ENCODE measurements at regions of chr12 and their contacts with region 1.

Region 1: DNA sequence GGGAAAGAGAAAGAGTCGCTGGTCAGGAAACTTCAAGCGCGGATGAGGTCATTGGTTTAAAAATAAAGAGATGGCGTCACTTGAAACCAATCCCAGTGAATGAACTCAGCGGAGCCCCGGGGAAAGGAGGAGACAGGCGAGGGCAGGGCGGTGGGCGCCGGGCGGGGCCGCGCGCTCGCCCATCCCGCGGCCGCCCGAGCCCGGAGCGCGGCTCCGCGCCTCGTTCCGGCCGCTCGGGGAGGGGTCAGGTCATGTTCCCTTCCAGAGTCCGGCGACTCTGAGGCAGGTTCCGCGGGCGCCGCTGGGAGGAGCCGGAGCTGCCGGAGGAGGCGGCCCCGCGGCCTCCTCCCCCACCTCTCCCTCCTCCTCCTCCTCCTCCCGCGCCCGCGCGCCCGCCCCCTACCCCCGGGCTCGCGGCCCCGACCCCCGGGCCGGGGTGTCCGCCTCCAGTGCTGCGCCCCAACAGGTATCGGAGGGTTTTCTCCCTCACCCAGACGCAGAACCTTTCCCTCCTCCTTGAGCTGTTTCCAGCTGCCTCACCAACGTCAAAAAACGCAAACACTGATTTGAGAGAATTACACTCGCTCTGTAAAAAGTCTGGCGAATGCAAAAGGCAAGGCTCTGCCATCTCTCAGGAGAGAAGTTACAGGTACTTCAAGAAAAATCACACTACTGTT is at the start of gene DUSP16:
- DNase-seq: peak; percentile 82
- ATAC-seq: peak; percentile 76
- H3K4me3 Mint-ChIP-seq: peak within 1 kb of the TSS; percentile 84
- H3K27ac Mint-ChIP-seq: peak within 1 kb of the TSS; percentile 88
- H3K4me1 Mint-ChIP-seq: peaks cover 37% of the 10 kb centered on the region
- H3K27me3 Mint-ChIP-seq: no peaks in the 10 kb centered on the region
- total RNA-seq, gene DUSP16: 39.3 to 40.4 TPM

Region 2: DNA sequence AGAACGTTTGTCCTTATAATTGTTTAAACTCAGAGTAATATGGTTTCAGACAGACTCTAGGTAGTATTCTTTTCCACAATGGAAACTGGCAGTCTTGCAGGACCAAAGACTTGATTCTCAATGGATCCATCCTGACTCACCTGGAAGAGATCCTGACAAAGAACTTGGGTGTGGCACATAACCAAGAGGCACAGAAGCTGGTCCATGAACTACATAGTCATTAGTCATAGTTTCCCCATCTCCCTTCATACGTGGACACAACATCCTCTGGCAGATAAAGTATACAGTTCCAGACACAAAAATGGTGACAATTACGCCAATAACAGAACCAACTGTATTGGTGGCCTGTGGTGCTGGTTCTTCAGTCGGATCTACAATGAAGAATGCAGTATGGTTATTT is 436.2 kb before region 1 on chr12:
- CTCF ChIA-PET with region 1: no interaction called
- POLR2A ChIA-PET with region 1: no interaction called
- intact Hi-C with region 1: no loop called
- DNase-seq: no peak
- ATAC-seq: no peak
- H3K4me3 Mint-ChIP-seq: no peak overlapping the region
- H3K27ac Mint-ChIP-seq: no peak overlapping the region
- H3K4me1 Mint-ChIP-seq: no peaks in the 10 kb centered on the region
- H3K27me3 Mint-ChIP-seq: no peaks in the 10 kb centered on the region

Region 3: GRCh38 chr12:12376646-12377448 is 185.9 kb before region 1 on chr12:
- CTCF ChIA-PET with region 1: interaction called, 26 read pairs
- POLR2A ChIA-PET with region 1: no interaction called
- intact Hi-C with region 1: loop called (anchors 1 kb)
- DNase-seq: peak; percentile 27
- ATAC-seq: peak; percentile 75
- H3K4me3 Mint-ChIP-seq: no peak overlapping the region
- H3K27ac Mint-ChIP-seq: peak overlapping the region; percentile 45
- H3K4me1 Mint-ChIP-seq: peaks cover 37% of the 10 kb centered on the region
- H3K27me3 Mint-ChIP-seq: no peaks in the 10 kb centered on the region

Region 4: GRCh38 chr12:12456637-12457036 is 106.1 kb before region 1 on chr12:
- CTCF ChIA-PET with region 1: interaction called, 10 read pairs
- POLR2A ChIA-PET with region 1: no interaction called
- intact Hi-C with region 1: loop called in 1 of 2 experiments (anchors 5 kb)
- DNase-seq: no peak
- ATAC-seq: peak; percentile 57
- H3K4me3 Mint-ChIP-seq: peak overlapping the region; percentile 3
- H3K27ac Mint-ChIP-seq: peak overlapping the region; percentile 88
- H3K4me1 Mint-ChIP-seq: peaks cover 46% of the 10 kb centered on the region
- H3K27me3 Mint-ChIP-seq: no peaks in the 10 kb centered on the region

Region 5: DNA sequence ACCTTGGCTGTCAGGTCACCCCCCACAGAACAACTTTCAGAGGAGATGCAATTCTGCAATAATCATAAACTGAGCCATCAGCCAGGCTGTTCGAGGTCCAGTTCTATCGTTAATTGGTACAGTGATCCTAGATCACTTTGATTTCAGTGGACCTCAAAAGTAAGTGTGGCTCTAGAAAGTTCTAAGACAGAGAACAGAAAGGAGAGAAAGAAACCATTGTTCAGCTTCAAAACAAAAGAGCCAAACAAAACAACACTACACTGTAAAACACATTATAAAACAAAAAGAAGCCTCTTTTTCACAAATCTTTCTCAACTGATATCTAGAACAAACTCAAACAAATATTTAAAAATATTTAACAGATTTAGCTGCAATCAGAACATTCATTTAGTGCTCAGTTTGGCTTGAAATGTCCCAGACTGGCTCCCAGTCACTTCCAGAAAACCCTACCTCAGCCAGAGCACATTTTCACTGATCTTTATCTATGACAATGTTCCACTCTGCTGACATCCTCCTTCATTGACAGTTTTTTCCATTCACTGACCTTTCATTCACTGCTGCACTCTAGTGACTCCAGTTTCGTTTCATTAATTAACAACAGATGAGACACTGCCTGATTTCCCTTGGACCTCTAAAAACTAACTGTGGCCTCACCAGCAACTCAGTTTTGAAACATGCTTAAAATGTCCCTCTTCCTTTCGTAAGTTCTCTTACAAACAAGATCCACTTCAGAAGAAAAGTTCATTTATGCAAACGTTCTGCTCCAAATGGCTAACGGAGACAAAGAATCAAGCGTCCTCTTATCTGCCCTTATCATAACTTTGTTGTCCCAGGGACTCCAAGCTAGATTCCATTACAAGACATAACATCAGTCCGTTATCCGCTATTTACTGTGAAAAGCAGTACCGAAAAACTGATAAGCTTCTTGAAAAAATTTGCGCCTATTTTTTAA is 56.9 kb before region 1 on chr12:
- CTCF ChIA-PET with region 1: interaction called, 3 read pairs
- POLR2A ChIA-PET with region 1: no interaction called
- intact Hi-C with region 1: loop called (anchors 1 to 2 kb)
- DNase-seq: peak; percentile 51
- ATAC-seq: peak; percentile 79
- H3K4me3 Mint-ChIP-seq: peak overlapping the region; percentile 55
- H3K27ac Mint-ChIP-seq: peak overlapping the region; percentile 96
- H3K4me1 Mint-ChIP-seq: peaks cover 55% of the 10 kb centered on the region
- H3K27me3 Mint-ChIP-seq: no peaks in the 10 kb centered on the region

Region 6: GRCh38 chr12:12582895-12583303 is 20.2 kb after region 1 on chr12:
- CTCF ChIA-PET with region 1: interaction called, 3 read pairs
- POLR2A ChIA-PET with region 1: no interaction called
- intact Hi-C with region 1: loop called (anchors 1 to 2 kb)
- DNase-seq: peak; percentile 78
- ATAC-seq: peak; percentile 96
- H3K4me3 Mint-ChIP-seq: no peak overlapping the region
- H3K27ac Mint-ChIP-seq: peak overlapping the region; percentile 92
- H3K4me1 Mint-ChIP-seq: peaks cover 45% of the 10 kb centered on the region
- H3K27me3 Mint-ChIP-seq: no peaks in the 10 kb centered on the region

Region 7: DNA sequence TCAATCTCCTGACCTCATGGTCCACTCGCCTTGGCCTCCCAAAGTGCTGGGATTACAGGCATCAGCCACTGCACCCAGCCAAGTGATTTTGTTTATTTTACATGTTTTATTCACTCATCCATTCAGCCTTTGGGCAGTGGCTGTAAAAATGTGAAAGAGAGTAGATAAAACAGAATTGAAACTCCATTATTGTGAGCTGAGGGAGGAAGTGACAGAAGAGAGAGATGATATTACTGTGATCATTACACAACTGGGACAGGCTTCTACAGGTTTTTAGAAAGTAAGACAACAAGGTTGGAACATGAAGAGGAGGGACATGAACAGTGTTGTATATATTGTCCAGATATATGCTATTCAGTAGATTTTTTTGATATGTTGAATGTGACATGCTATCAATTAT is 73.9 kb after region 1 on chr12:
- CTCF ChIA-PET with region 1: no interaction called
- POLR2A ChIA-PET with region 1: no interaction called
- intact Hi-C with region 1: no loop called
- DNase-seq: no peak
- ATAC-seq: peak; percentile 61
- H3K4me3 Mint-ChIP-seq: no peak overlapping the region
- H3K27ac Mint-ChIP-seq: peak overlapping the region; percentile 17
- H3K4me1 Mint-ChIP-seq: peaks cover 7% of the 10 kb centered on the region
- H3K27me3 Mint-ChIP-seq: no peaks in the 10 kb centered on the region

Region 8: DNA sequence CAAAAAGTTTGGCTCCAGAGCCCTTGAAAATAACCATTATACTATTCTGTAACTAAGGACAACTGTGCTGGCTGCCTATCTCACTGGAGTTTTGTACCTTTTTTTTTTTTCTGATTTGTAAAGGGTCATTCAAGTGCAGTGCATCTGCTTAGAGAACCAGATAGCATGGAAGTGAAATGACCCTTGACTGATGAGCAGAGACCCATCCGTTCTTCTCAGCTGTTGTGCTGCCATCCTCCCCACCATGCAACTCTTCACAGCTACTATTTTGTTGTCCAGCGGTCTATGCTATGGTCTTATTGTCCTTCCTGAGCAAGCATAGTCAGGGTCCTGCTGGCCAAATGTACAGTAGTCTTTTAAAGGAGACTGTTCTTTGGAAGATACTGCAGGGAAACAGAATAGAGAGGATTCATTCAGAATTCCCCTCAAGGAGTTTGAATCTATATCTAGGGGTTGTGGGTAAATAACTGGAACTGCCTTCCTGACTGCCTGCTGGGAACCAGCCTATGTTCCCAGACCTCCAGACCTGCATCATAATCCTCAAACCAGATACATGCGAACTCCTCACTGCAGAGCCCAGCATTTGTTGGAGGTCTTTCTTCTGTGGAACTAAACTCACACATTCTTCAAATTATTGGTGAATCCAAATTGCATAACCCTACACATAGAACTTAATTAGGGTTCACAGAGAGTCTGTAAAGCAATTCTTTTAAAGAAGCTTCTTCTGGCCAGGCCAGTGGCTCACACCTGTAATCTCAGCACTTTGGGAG is 92.2 kb after region 1 on chr12:
- CTCF ChIA-PET with region 1: interaction called, 5 read pairs
- POLR2A ChIA-PET with region 1: no interaction called
- intact Hi-C with region 1: loop called in 1 of 2 experiments (anchors 5 kb)
- DNase-seq: no peak
- ATAC-seq: no peak
- H3K4me3 Mint-ChIP-seq: no peak overlapping the region
- H3K27ac Mint-ChIP-seq: no peak overlapping the region
- H3K4me1 Mint-ChIP-seq: peaks cover 7% of the 10 kb centered on the region
- H3K27me3 Mint-ChIP-seq: no peaks in the 10 kb centered on the region

Region 9: GRCh38 chr12:12724661-12725545 is 162.2 kb after region 1 on chr12:
- CTCF ChIA-PET with region 1: no interaction called
- POLR2A ChIA-PET with region 1: interaction called, 3 read pairs
- intact Hi-C with region 1: loop called in 1 of 2 experiments (anchors 2 kb)
- DNase-seq: peak; percentile 94
- ATAC-seq: peak; percentile 59
- H3K4me3 Mint-ChIP-seq: peak overlapping the region; percentile 93
- H3K27ac Mint-ChIP-seq: peak overlapping the region; percentile 98
- H3K4me1 Mint-ChIP-seq: peaks cover 45% of the 10 kb centered on the region
- H3K27me3 Mint-ChIP-seq: no peaks in the 10 kb centered on the region